ENCODE measurements at regions of chr7 and their contacts with region 1.

Region 1: GRCh38 chr7:20114468-20114867 is 102.7 kb downstream of the MACC1 start:
- DNase-seq: no peak
- H3K4me3 ChIP-seq: no peak overlapping the region
- H3K27ac ChIP-seq: no peak overlapping the region
- H3K4me1 ChIP-seq: peaks cover 2 to 43% (median 13%) of the 10 kb centered on the region in 4 experiments; a peak in 6 of 7 replicates
- H3K27me3 ChIP-seq: no peaks in the 10 kb centered on the region
- CTCF ChIP-seq: no peak
- EP300 ChIP-seq: no peak
- POLR2A ChIP-seq: peak in 1 of 2 experiments; percentile 30; a peak in 1 of 3 replicates
- RAD21 ChIP-seq: no peak

Region 2: DNA sequence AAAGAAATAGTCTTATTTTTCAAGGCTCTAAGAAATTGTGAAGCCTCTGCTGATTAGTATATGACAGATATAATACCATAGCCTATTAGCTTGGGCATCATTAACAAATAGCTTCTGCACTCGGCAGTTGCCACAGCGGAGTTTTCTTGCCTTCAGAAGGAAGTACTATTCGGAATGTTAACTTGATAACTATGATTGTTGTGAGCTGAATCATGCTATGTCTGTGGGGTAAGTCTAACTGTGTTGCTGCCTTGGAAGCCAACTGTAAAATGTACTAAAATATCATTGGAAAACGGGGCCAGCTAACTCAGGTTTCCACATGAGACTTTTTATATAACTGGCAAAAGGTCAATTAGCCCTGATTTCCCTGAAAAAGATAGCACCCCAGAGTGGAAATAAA is 1090.2 kb before region 1 on chr7:
- CTCF ChIA-PET with region 1: no interaction called
- POLR2A ChIA-PET with region 1: no interaction called
- DNase-seq: no peak
- H3K4me3 ChIP-seq: no peak overlapping the region
- H3K27ac ChIP-seq: no peak overlapping the region
- H3K4me1 ChIP-seq: no peaks in the 10 kb centered on the region
- H3K27me3 ChIP-seq: no peaks in the 10 kb centered on the region
- CTCF ChIP-seq: no peak
- EP300 ChIP-seq: no peak
- POLR2A ChIP-seq: no peak
- RAD21 ChIP-seq: no peak

Region 3: GRCh38 chr7:20019757-20020432 is 94.6 kb before region 1 on chr7:
- CTCF ChIA-PET with region 1: no interaction called
- POLR2A ChIA-PET with region 1: interaction called, 10 read pairs
- DNase-seq: peak in 1 of 2 experiments; percentile 15
- H3K4me3 ChIP-seq: peak overlapping the region in 1 of 4 experiments; percentile 33; a peak in 2 of 8 replicates
- H3K27ac ChIP-seq: peak overlapping the region; percentile 75; the same call in 1 of the 2 replicates
- H3K4me1 ChIP-seq: peaks cover 3 to 22% (median 10%) of the 10 kb centered on the region in 4 experiments; a peak in 6 of 7 replicates
- H3K27me3 ChIP-seq: no peaks in the 10 kb centered on the region
- CTCF ChIP-seq: no peak
- EP300 ChIP-seq: 0 out of 3 replicates have a peak, but pooled peaks of 1 of the 2 experiments have one; percentile 64
- POLR2A ChIP-seq: no peak
- RAD21 ChIP-seq: no peak

Region 4: GRCh38 chr7:20095436-20095835 is 19.0 kb before region 1 on chr7:
- CTCF ChIA-PET with region 1: interaction called, 4 read pairs
- POLR2A ChIA-PET with region 1: interaction called, 28 read pairs
- DNase-seq: no peak
- H3K4me3 ChIP-seq: no peak overlapping the region
- H3K27ac ChIP-seq: no peak overlapping the region
- H3K4me1 ChIP-seq: peaks cover 0 to 13% (median under 1%) of the 10 kb centered on the region in 4 experiments; a peak in 4 of 7 replicates
- H3K27me3 ChIP-seq: no peaks in the 10 kb centered on the region
- CTCF ChIP-seq: no peak
- EP300 ChIP-seq: no peak
- POLR2A ChIP-seq: no peak
- RAD21 ChIP-seq: no peak

Region 5: GRCh38 chr7:20132631-20133030 is 18.2 kb after region 1 on chr7:
- CTCF ChIA-PET with region 1: interaction called, 4 read pairs
- POLR2A ChIA-PET with region 1: interaction called, 68 read pairs
- DNase-seq: no peak
- H3K4me3 ChIP-seq: no peak overlapping the region
- H3K27ac ChIP-seq: no peak overlapping the region
- H3K4me1 ChIP-seq: peaks cover 0 to 14% (median 1%) of the 10 kb centered on the region in 4 experiments; a peak in 3 of 7 replicates
- H3K27me3 ChIP-seq: no peaks in the 10 kb centered on the region
- CTCF ChIP-seq: no peak
- EP300 ChIP-seq: no peak
- POLR2A ChIP-seq: no peak; a peak in 1 of 3 replicates
- RAD21 ChIP-seq: no peak

Region 6: GRCh38 chr7:20146451-20146850 is 32.0 kb after region 1 on chr7:
- CTCF ChIA-PET with region 1: no interaction called
- POLR2A ChIA-PET with region 1: no interaction called
- DNase-seq: no peak
- H3K4me3 ChIP-seq: no peak overlapping the region
- H3K27ac ChIP-seq: no peak overlapping the region
- H3K4me1 ChIP-seq: no peaks in the 10 kb centered on the region
- H3K27me3 ChIP-seq: no peaks in the 10 kb centered on the region
- CTCF ChIP-seq: no peak
- EP300 ChIP-seq: no peak
- POLR2A ChIP-seq: no peak
- RAD21 ChIP-seq: no peak

Region 7: DNA sequence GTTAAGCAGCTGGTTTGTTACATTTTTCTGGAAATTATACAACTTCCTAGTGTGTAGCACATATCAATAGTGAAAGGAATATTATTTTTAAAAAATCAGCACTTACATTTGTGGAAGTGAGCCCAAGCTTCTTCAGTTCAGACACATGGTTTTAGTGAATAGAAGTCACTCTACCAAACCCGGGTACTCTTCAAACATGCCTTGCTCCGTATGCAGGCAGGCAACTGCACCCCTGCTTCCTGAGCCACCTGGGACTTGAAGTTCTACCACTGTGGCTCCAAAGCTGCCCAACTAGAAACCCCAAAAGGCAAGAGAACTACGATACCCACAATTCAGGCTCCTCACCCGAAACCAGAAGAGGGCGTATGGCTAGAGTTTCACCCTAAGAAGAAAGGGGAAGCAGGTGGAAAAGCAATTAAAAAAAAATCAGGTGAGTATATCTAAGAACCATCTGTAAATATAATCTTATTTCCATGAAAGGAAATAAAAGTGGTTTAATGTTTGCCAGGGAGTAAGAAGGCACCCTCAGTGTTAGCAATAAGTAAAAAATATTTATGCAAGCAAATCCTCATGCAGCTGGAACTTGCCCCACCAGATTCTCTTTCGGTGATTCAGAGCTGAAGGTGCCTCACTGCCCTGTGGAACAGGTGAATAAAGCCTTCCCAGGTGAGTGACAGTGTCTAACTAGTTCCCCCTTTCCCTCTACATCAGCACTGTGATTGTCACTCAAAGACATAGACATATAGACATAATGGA is 102.9 kb after region 1 on chr7 and contains the start of gene MACC1:
- CTCF ChIA-PET with region 1: no interaction called
- POLR2A ChIA-PET with region 1: no interaction called
- DNase-seq: peak; percentile 64 to 86
- H3K4me3 ChIP-seq: peak within 1 kb of the TSS; percentile 16 to 60 (median 24); a peak in 5 of 8 replicates
- H3K27ac ChIP-seq: peak within 1 kb of the TSS; percentile 71
- H3K4me1 ChIP-seq: peaks cover 0 to 8% (median 7%) of the 10 kb centered on the region in 4 experiments; a peak in 4 of 7 replicates
- H3K27me3 ChIP-seq: no peaks in the 10 kb centered on the region
- CTCF ChIP-seq: peak in 2 of 3 experiments; percentile 34 to 76; a peak in 3 of 4 replicates
- EP300 ChIP-seq: peak; percentile 49 to 98
- POLR2A ChIP-seq: peak; percentile 34 to 82
- RAD21 ChIP-seq: peak in 1 of 2 experiments; percentile 13; a peak in 2 of 4 replicates
- total RNA-seq, gene MACC1: 17.1 and 17.2 TPM in 2 replicates